ENCODE measurements at regions of chr5 and their contacts with region 1.

Region 1: DNA sequence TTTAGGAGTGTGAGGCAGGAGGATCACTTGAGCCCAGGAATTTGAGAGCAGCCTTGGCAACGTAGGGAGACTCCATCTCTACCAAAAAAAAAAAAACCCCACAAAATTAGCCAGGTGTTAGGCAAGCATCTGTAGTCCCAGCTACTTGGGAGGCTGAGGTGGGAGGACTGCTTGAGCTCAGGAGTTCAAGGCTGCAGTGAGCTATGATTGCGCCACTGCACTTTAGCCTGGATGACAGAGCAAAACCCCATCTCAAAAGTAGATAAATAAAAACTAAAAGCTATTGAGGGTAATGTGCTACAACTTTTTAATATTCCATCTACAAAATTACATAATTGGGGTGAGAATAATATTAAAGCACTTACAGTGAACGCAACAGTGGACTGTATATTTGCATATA is 5.9 kb downstream of the BDP1 start:
- DNase-seq: no peak
- H3K4me3 ChIP-seq: no peak overlapping the region
- H3K27ac ChIP-seq: no peak overlapping the region
- H3K4me1 ChIP-seq: peaks cover 5 to 15% (median 9%) of the 10 kb centered on the region in 4 experiments
- H3K27me3 ChIP-seq: no peaks in the 10 kb centered on the region

Region 2: GRCh38 chr5:71384706-71385105 is 76.7 kb before region 1 on chr5:
- CTCF ChIA-PET with region 1: no interaction called
- POLR2A ChIA-PET with region 1: no interaction called
- DNase-seq: no peak
- H3K4me3 ChIP-seq: no peak overlapping the region
- H3K27ac ChIP-seq: no peak overlapping the region
- H3K4me1 ChIP-seq: no peaks in the 10 kb centered on the region
- H3K27me3 ChIP-seq: no peaks in the 10 kb centered on the region

Region 3: DNA sequence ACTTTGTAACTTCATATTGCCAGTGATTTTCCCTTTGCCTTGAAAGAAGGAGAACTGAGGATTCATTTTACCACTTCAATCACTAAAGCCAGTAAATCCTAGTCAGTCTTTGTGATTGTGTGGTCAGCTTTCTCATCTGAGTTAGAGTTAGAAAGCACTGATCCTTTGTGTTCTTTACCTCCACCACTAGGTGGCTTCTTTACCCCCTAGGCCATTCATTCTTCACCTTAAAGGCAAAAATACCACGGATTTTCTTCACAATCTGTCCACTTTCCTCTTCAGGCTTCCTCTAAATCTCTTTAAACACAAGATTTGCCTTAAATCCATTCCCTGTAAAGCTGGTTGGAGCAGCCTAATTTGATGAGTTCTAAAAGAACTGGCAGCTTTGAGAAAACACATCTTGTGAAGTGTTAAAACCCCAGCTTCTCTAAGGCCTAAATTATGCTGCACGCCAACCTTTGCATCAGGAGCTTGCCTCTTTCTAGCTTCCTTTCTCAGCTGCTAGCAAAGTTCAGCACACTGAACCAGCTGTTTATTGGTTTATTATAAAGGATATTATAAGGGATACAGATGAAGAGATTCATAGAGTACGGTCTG is 14.5 kb after region 1 on chr5:
- CTCF ChIA-PET with region 1: interaction called, 18 read pairs
- POLR2A ChIA-PET with region 1: no interaction called
- DNase-seq: peak; percentile 10 to 29 (median 24)
- H3K4me3 ChIP-seq: no peak overlapping the region
- H3K27ac ChIP-seq: no peak overlapping the region
- H3K4me1 ChIP-seq: no peaks in the 10 kb centered on the region
- H3K27me3 ChIP-seq: no peaks in the 10 kb centered on the region

Measured in common myeloid progenitor, CD34-positive (primary cell).